A549 (cell line): ENCODE measurements at regions of chr12 and their contacts with region 1.

Region 1: GRCh38 chr12:57111031-57111734 is at the start of gene STAT6:
- DNase-seq: peak; percentile 67 to 87
- ATAC-seq: peak; percentile 71 to 78
- H3K4me3 ChIP-seq: peak within 1 kb of the TSS; percentile 59
- H3K27ac ChIP-seq: peak within 1 kb of the TSS; percentile 92 to 98
- H3K4me1 ChIP-seq: peaks cover 19% of the 10 kb centered on the region
- CTCF ChIP-seq: no peak; the same call in 2 of the 3 replicates
- EP300 ChIP-seq: no peak
- POLR2A ChIP-seq: peak; percentile 37
- RAD21 ChIP-seq: no peak
- polyA plus RNA-seq, gene STAT6: 58.8 and 64.6 TPM in 2 replicates

Region 2: DNA sequence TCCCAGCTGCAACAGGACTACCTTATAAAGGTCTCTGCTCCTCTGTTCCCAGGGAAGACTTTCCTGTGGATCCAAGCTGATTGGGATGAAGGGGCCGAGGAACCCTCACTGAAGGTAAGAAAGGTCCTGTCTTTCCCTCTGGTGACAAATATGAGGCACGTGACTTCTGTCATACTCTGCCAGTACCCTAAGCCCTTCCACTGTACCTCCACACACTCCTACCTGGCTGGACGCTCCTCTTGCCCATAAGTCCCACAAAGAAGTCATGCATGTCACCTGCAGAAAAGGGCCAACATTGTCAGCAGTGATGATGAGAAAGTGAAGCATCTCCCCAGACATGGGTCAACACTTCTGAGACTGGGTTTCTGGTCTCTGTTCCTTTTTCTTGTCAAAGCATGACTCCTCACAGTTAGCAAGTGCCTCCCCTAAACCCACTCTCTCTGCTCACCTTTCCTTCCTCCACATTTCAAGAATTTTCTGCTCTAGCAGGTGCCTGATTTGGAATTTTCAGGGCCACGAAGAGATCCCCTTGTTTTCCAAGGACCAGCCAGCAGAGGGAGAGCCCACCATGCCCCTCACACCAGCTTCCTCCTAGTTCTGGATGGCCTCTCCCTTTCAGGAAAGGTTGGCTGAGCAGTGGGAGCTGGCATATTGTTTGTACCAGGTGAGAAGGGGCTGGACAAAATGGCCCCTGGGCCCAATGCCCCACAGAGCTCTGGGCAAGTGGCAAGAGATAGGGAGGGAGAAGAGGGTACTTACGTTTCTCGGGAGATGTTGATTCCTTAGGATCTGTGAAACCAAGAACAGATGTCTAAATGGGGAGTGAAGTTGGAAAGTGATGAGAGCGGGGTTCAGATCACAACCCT is 98.3 kb before region 1 on chr12:
- CTCF ChIA-PET with region 1: interaction called, 39 read pairs
- POLR2A ChIA-PET with region 1: interaction called, 5 read pairs
- DNase-seq: no peak
- ATAC-seq: no peak
- H3K4me3 ChIP-seq: no peak overlapping the region
- H3K27ac ChIP-seq: no peak overlapping the region
- H3K4me1 ChIP-seq: peaks cover 15% of the 10 kb centered on the region
- CTCF ChIP-seq: no peak
- EP300 ChIP-seq: no peak
- POLR2A ChIP-seq: no peak
- RAD21 ChIP-seq: no peak

Region 3: GRCh38 chr12:57063991-57064685 is 47.0 kb before region 1 on chr12:
- CTCF ChIA-PET with region 1: interaction called, 440 read pairs
- POLR2A ChIA-PET with region 1: interaction called, 66 read pairs
- DNase-seq: no peak
- ATAC-seq: no peak
- H3K4me3 ChIP-seq: no peak overlapping the region
- H3K27ac ChIP-seq: no peak overlapping the region
- H3K4me1 ChIP-seq: 0 out of 3 replicates have a peak, but pooled peaks cover 6% of the 10 kb centered on the region
- CTCF ChIP-seq: no peak
- EP300 ChIP-seq: no peak
- POLR2A ChIP-seq: no peak
- RAD21 ChIP-seq: no peak

Region 4: GRCh38 chr12:57088459-57089248 is 22.5 kb before region 1 on chr12 and contains the start of gene NAB2:
- CTCF ChIA-PET with region 1: interaction called, 440 read pairs
- POLR2A ChIA-PET with region 1: interaction called, 143 read pairs
- DNase-seq: peak; percentile 89 to 97
- ATAC-seq: peak; percentile 48 to 71
- H3K4me3 ChIP-seq: peak within 1 kb of the TSS; percentile 89
- H3K27ac ChIP-seq: peak within 1 kb of the TSS; percentile 96 to 100
- H3K4me1 ChIP-seq: peaks cover 19% of the 10 kb centered on the region
- CTCF ChIP-seq: no peak
- EP300 ChIP-seq: no peak
- POLR2A ChIP-seq: peak; percentile 67
- RAD21 ChIP-seq: no peak
- polyA plus RNA-seq, gene NAB2: 8.6 and 10.1 TPM in 2 replicates

Region 5: GRCh38 chr12:57166971-57167371 is 55.8 kb after region 1 on chr12:
- CTCF ChIA-PET with region 1: interaction called, 1,152 read pairs
- POLR2A ChIA-PET with region 1: interaction called, 3 read pairs
- DNase-seq: peak; percentile 78 to 90
- ATAC-seq: peak; percentile 80 to 81
- H3K4me3 ChIP-seq: no peak overlapping the region
- H3K27ac ChIP-seq: peak overlapping the region; percentile 71 to 85
- H3K4me1 ChIP-seq: peaks cover 35% of the 10 kb centered on the region
- CTCF ChIP-seq: no peak
- EP300 ChIP-seq: peak; percentile 24 to 34; a peak in 2 of 5 replicates
- POLR2A ChIP-seq: no peak
- RAD21 ChIP-seq: no peak

Region 6: GRCh38 chr12:57190037-57190436 is 78.9 kb after region 1 on chr12:
- CTCF ChIA-PET with region 1: interaction called, 1,152 read pairs
- POLR2A ChIA-PET with region 1: no interaction called
- DNase-seq: no peak
- ATAC-seq: no peak
- H3K4me3 ChIP-seq: no peak overlapping the region
- H3K27ac ChIP-seq: no peak overlapping the region
- H3K4me1 ChIP-seq: no peaks in the 10 kb centered on the region
- CTCF ChIP-seq: no peak
- EP300 ChIP-seq: no peak
- POLR2A ChIP-seq: no peak
- RAD21 ChIP-seq: no peak